Activated naive CD4-positive, alpha-beta T cell treated with anti-CD3 and anti-CD28 coated beads for 36 hours (primary cell): ENCODE measurements at regions of chr3 and their contacts with region 1.

Region 1: DNA sequence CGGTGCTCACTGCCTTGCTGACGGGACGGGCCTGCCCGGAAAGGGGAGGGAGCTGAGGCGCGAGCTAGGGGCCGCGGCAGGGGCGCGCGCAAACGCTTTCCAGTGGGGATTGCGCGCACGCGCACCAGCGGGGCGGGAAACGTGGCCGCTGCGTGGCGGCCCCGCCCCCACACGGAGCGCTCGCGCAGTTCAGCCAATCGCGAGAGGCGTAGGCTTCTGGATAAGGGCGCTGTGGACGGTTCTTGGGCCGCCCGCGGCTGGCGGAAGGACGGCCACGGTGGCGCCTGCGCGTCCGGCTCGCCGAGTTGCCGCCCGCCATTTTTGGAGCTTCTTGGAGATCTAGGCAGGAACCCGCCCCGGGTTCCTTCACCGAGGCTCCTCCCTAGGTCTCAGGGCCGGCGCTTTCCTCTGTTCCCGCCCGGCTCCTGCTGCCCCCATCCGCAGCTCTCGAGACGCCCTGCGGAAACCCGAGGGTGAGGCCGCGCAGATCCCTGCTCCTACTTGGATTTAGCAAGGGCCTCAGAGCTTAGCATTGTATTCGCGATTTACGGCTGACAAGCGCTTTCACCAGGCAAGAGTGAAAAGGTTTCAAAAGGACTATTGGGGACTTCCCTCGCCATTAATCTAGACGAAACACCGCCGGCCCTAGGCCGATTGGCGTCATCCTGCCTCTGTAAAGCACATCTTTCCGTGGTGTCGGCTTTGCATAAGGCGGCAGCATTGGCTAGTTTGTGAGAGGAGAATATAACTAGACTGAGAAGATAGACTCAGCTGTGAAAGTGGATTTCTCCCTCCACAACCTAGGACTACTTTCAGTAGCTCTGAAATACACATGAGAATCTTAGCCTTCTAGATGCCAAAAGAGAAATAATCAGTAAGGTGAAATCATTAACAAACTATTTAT is 496 bp upstream of the STAG1 start:
- DNase-seq: peak; percentile 99
- H3K4me3 Mint-ChIP-seq: peak overlapping the region; percentile 86
- H3K27ac Mint-ChIP-seq: peak overlapping the region; percentile 97
- H3K4me1 Mint-ChIP-seq: peaks cover 29% of the 10 kb centered on the region
- H3K27me3 Mint-ChIP-seq: no peaks in the 10 kb centered on the region

Region 2: DNA sequence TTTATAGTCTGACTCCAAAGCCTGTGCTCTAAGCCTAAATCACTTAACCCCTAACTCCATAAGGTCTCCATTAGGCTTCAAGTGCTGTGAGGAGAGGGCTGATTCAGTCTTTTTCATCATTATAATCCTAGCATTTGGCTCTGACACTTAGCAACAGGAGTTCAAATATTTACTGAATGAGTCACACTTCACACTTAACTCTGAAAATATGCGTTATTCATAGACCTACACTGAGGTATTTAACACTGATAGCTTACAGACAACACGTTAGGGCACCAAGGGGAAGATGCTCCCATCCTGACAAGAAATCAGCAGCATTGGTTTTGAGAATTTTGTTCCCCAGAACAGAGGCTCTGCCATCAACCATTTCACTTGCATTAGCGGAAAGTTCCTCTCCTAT is 610.1 kb before region 1 on chr3:
- CTCF ChIA-PET with region 1: no interaction called
- intact Hi-C with region 1: loop called (anchors 2 kb)
- DNase-seq: no peak
- H3K4me3 Mint-ChIP-seq: no peak overlapping the region
- H3K27ac Mint-ChIP-seq: no peak overlapping the region
- H3K4me1 Mint-ChIP-seq: peaks cover 27% of the 10 kb centered on the region
- H3K27me3 Mint-ChIP-seq: no peaks in the 10 kb centered on the region

Region 3: DNA sequence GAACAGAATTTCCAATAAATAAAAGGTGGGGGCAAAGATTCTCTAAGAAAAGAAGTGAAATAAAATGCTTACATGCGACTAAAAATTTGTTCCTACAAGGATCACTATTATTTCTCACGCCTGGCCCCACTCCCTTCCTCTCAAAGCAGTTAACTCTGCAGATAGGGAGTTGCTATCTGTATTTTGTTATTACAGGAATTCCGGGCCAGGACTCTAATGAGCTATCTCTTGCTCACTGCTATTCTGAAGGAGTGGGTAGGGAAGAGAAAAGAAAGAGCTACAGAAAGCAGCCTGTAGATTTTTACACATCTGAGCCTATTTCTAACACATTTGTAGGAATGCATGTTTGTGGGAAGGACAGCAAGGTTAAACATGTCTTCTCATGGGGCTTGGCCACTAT is 362.1 kb before region 1 on chr3:
- CTCF ChIA-PET with region 1: interaction called, 24 read pairs
- intact Hi-C with region 1: loop called (anchors 1 kb)
- DNase-seq: no peak
- H3K4me3 Mint-ChIP-seq: no peak overlapping the region
- H3K27ac Mint-ChIP-seq: no peak overlapping the region
- H3K4me1 Mint-ChIP-seq: no peaks in the 10 kb centered on the region
- H3K27me3 Mint-ChIP-seq: no peaks in the 10 kb centered on the region

Region 4: DNA sequence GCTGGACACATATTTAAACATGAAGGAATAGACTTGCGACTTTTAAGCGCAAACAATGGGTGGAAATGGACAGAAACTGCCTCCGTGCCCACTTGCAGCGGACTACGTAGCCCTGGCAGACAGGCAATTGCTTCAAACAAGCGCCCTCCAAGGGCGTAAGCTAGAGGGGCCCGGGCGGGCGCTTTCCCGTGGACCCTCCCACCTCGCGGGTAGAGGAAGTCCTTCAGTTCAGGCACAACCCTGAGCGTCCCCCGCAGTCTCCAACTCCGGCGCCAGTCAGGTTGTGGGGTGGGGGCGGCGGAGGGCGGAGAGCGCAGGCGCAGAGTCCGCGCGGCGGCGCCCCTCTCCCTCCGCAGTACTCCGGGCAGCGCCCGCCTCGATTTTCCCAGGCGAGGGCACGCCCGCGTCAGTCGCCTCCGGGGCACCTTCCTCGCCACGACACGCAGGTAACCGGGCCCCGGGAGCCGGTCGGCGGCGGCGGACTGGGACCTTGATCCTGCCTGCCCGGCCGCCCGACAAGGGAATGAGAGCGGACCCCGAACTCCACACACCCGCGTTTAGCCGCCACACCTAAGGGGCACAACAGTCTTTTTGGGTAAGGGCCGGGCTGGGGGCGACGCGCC is 66.2 kb after region 1 on chr3 and contains the start of gene SLC35G2:
- CTCF ChIA-PET with region 1: interaction called, 3 read pairs
- intact Hi-C with region 1: loop called (anchors 1 kb)
- DNase-seq: peak; percentile 38
- H3K4me3 Mint-ChIP-seq: peak within 1 kb of the TSS; percentile 69
- H3K27ac Mint-ChIP-seq: no peak within 1 kb of the TSS
- H3K4me1 Mint-ChIP-seq: peaks cover 19% of the 10 kb centered on the region
- H3K27me3 Mint-ChIP-seq: peaks cover 39% of the 10 kb centered on the region
- total RNA-seq, gene SLC35G2: 0.31 TPM in 1 of 2 experiments, not detected in the other

Region 5: DNA sequence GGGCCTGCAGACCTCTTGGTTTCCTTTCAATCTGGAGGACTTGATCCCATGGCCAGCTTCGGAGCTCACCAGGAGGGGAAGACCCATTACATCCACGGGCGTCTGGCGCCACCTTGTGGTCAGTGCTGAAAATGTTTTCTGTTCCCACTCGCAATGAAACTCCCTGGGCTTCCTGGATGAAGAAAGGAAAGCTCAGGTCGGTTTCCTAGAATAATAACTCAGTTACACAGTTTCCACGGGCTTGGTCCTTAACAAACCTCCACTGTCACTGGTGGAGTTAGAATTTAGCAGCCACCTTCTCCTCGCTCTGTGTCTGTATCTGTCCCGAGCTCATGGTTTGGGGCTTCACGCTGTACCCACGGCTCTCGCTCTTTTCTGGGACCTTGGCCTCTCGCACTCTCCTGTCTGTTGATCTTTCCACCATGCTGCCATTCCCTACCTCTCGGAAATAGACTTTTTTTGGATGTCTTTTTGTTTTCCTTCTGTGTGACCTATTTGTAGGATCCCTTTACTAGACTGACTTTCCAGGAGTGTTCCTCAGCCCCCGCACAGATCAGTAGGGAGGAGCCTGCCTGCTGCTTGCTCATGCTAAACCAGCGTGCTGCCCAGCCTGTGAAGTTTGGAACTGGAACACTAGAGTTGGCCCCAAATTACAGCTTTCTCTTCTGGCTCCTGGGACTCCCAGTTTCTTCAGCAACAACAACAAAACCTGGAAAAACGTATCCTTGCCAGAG is 261.4 kb after region 1 on chr3:
- CTCF ChIA-PET with region 1: interaction called, 126 read pairs
- intact Hi-C with region 1: loop called (anchors 1 kb)
- DNase-seq: peak; percentile 89
- H3K4me3 Mint-ChIP-seq: peak overlapping the region; percentile 70
- H3K27ac Mint-ChIP-seq: no peak overlapping the region
- H3K4me1 Mint-ChIP-seq: peaks cover 6% of the 10 kb centered on the region
- H3K27me3 Mint-ChIP-seq: no peaks in the 10 kb centered on the region